ENCODE measurements at regions of chr5 and their contacts with region 1.

Region 1: GRCh38 chr5:26641492-26641891 is 396.9 kb downstream of the CDH9 start:
- DNase-seq: no peak
- ATAC-seq: no peak
- H3K4me3 ChIP-seq: no peak overlapping the region
- H3K27ac ChIP-seq: no peak overlapping the region
- H3K4me1 ChIP-seq: no peaks in the 10 kb centered on the region
- H3K27me3 ChIP-seq: no peaks in the 10 kb centered on the region
- CTCF ChIP-seq: no peak

Region 2: GRCh38 chr5:26009742-26010141 is 631.8 kb before region 1 on chr5:
- intact Hi-C with region 1: loop called in 1 of 10 experiments (anchors 5 kb)
- DNase-seq: no peak
- ATAC-seq: no peak
- H3K4me3 ChIP-seq: no peak overlapping the region
- H3K27ac ChIP-seq: no peak overlapping the region
- H3K4me1 ChIP-seq: no peaks in the 10 kb centered on the region
- H3K27me3 ChIP-seq: no peaks in the 10 kb centered on the region
- CTCF ChIP-seq: peak in 1 of 9 donors; percentile 13

Measured in heart right ventricle (tissue), 16 donors.